ENCODE measurements at regions of chr3 and their contacts with region 1.

Region 1: GRCh38 chr3:187738331-187739093 is 6.8 kb downstream of the BCL6 start:
- DNase-seq: peak; percentile 82
- ATAC-seq: peak; percentile 25
- H3K4me3 Mint-ChIP-seq: peak overlapping the region; percentile 91
- H3K27ac Mint-ChIP-seq: peak overlapping the region; percentile 99
- H3K4me1 Mint-ChIP-seq: peaks cover 47% of the 10 kb centered on the region
- H3K27me3 Mint-ChIP-seq: no peaks in the 10 kb centered on the region

Region 2: DNA sequence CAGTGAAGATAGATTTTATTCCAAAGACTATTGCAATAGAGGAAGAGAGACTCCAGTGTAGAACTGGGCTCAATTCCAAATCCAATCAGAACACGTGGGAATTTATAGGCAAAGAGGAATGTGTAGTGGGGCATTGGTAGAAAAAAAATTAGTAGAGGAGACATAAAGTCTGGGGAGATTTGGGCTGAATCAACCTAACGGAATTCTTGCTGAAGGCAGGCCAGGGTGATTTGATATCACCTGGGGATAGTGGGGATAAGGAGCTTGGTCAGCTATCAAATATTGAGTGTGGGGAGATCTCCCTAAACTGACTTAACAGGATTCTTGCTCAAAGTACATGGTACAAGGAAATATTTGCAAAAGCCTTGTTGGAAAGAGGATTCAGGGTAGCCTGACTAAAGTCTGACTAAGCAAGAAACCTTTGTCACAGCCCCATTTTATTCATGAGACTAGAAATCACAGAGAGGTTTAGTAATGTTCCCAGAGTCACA is 97.9 kb before region 1 on chr3:
- CTCF ChIA-PET with region 1: no interaction called
- POLR2A ChIA-PET with region 1: no interaction called
- intact Hi-C with region 1: no loop called
- DNase-seq: no peak
- ATAC-seq: no peak
- H3K4me3 Mint-ChIP-seq: no peak overlapping the region
- H3K27ac Mint-ChIP-seq: no peak overlapping the region
- H3K4me1 Mint-ChIP-seq: no peaks in the 10 kb centered on the region
- H3K27me3 Mint-ChIP-seq: peaks cover 19% of the 10 kb centered on the region

Region 3: GRCh38 chr3:187811585-187812250 is 73.2 kb after region 1 on chr3:
- CTCF ChIA-PET with region 1: interaction called, 11 read pairs
- POLR2A ChIA-PET with region 1: no interaction called
- intact Hi-C with region 1: loop called in 1 of 2 experiments (anchors 2 kb)
- DNase-seq: no peak
- ATAC-seq: no peak
- H3K4me3 Mint-ChIP-seq: no peak overlapping the region
- H3K27ac Mint-ChIP-seq: no peak overlapping the region
- H3K4me1 Mint-ChIP-seq: peaks cover 17% of the 10 kb centered on the region
- H3K27me3 Mint-ChIP-seq: peaks cover 4% of the 10 kb centered on the region

Region 4: DNA sequence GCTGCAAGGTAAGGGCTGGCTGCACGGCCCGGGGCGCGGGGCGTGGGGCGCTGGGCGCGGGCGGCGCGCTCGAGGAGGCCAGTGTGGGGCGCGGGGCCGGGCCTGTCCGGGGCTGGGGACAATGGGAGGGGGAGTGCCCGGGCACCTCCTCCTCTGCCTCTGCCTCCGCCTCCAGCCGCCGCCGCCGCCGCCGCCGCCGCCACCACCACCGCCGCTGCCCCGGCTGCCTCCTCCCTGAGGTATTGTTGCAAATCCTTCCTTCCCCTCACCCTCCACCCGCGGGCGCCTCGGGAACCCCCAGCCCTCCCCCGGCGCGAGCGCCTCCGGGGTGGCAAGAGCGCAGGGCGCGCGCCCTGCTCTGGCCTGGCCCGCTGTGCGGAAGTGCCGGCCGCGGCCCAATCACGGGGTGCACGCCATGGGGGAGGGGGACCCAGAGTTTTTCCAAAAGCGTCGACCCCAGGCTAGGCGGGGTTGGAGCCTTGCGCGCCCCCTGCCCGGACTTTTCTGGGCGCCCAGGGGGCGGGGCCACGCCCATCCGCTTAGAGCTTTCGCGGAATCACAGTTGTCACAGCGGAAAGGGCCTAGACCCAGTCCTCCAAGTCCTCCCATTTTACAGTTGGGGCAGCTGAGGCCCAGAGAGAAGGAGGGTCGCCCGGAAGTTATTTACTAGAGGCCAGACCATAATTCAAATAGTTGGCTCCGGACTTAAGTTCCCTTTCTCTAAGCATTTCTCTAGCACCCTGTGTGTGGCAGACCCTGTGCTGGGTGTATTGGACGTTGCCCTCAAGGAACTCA is 415.7 kb after region 1 on chr3 and contains the start of gene LPP:
- CTCF ChIA-PET with region 1: interaction called, 25 read pairs
- POLR2A ChIA-PET with region 1: interaction called, 4 read pairs
- intact Hi-C with region 1: loop called (anchors 1 to 2 kb)
- DNase-seq: peak; percentile 91
- ATAC-seq: peak; percentile 76
- H3K4me3 Mint-ChIP-seq: peak within 1 kb of the TSS; percentile 76
- H3K27ac Mint-ChIP-seq: peak within 1 kb of the TSS; percentile 95
- H3K4me1 Mint-ChIP-seq: peaks cover 64% of the 10 kb centered on the region
- H3K27me3 Mint-ChIP-seq: peaks cover 3% of the 10 kb centered on the region
- total RNA-seq, gene LPP: 34.7 to 40.6 TPM

Region 5: GRCh38 chr3:188286087-188286513 is 547.6 kb after region 1 on chr3:
- CTCF ChIA-PET with region 1: interaction called, 58 read pairs
- POLR2A ChIA-PET with region 1: interaction called, 29 read pairs
- intact Hi-C with region 1: loop called (anchors 1 kb)
- DNase-seq: peak; percentile 29
- ATAC-seq: no peak
- H3K4me3 Mint-ChIP-seq: no peak overlapping the region
- H3K27ac Mint-ChIP-seq: peak overlapping the region; percentile 72
- H3K4me1 Mint-ChIP-seq: peaks cover 55% of the 10 kb centered on the region
- H3K27me3 Mint-ChIP-seq: no peaks in the 10 kb centered on the region

Region 6: DNA sequence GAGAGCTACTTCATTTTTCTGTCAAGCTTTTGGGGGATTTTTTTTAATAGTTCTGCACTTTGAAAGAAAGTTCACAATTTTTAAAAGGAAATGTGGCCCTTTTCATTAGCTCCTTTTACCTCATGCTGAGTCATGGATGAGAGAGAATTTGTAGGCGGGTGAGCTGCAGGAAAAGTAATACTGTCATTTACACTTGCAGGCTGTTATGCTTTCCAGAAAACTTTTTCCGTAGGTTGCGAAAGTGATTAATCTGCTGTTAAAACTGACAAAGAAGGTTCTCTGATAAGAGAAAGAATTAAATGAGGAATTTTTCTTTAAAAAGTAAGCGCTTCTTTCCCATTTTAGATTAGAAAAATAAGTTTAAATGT is 845.6 kb after region 1 on chr3:
- CTCF ChIA-PET with region 1: no interaction called
- POLR2A ChIA-PET with region 1: interaction called, 3 read pairs
- intact Hi-C with region 1: loop called (anchors 2 kb)
- DNase-seq: peak; percentile 43
- ATAC-seq: peak; percentile 60
- H3K4me3 Mint-ChIP-seq: no peak overlapping the region
- H3K27ac Mint-ChIP-seq: no peak overlapping the region
- H3K4me1 Mint-ChIP-seq: peaks cover 12% of the 10 kb centered on the region
- H3K27me3 Mint-ChIP-seq: no peaks in the 10 kb centered on the region

Region 7: DNA sequence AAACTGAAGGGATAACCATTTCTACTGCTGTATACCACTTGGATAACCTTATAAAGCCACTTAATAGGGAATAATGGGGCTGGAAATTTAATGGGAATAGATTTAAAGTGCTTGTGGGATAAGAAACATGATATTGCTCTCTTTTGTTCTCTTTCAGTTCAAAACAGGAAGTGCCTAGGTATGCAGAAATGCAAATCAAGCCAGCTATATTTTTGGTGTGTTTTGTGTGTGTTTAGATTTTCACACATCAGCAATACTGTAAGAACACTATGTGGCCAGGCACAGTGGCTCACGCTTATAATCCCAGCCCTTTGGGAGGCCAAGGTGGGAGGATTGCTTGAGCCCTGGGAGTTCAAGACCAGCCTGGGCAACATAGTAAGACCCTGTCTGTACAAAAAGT is 990.9 kb after region 1 on chr3:
- CTCF ChIA-PET with region 1: interaction called, 14 read pairs
- POLR2A ChIA-PET with region 1: interaction called, 3 read pairs
- intact Hi-C with region 1: no loop called
- DNase-seq: no peak
- ATAC-seq: no peak
- H3K4me3 Mint-ChIP-seq: no peak overlapping the region
- H3K27ac Mint-ChIP-seq: no peak overlapping the region
- H3K4me1 Mint-ChIP-seq: peaks cover 34% of the 10 kb centered on the region
- H3K27me3 Mint-ChIP-seq: peaks cover 6% of the 10 kb centered on the region

Region 8: GRCh38 chr3:188954590-188955208 is 1216.2 kb after region 1 on chr3:
- CTCF ChIA-PET with region 1: interaction called, 169 read pairs
- POLR2A ChIA-PET with region 1: interaction called, 6 read pairs
- intact Hi-C with region 1: loop called (anchors 1 kb)
- DNase-seq: peak; percentile 90
- ATAC-seq: peak; percentile 61
- H3K4me3 Mint-ChIP-seq: no peak overlapping the region
- H3K27ac Mint-ChIP-seq: no peak overlapping the region
- H3K4me1 Mint-ChIP-seq: peaks cover 46% of the 10 kb centered on the region
- H3K27me3 Mint-ChIP-seq: no peaks in the 10 kb centered on the region

Measured in activated CD4-positive, alpha-beta T cell treated with anti-CD3 and anti-CD28 coated beads for 36 hours (primary cell).